Left cardiac atrium (tissue), 4 donors: ENCODE measurements at regions of chr19 and their contacts with region 1.

Region 1: DNA sequence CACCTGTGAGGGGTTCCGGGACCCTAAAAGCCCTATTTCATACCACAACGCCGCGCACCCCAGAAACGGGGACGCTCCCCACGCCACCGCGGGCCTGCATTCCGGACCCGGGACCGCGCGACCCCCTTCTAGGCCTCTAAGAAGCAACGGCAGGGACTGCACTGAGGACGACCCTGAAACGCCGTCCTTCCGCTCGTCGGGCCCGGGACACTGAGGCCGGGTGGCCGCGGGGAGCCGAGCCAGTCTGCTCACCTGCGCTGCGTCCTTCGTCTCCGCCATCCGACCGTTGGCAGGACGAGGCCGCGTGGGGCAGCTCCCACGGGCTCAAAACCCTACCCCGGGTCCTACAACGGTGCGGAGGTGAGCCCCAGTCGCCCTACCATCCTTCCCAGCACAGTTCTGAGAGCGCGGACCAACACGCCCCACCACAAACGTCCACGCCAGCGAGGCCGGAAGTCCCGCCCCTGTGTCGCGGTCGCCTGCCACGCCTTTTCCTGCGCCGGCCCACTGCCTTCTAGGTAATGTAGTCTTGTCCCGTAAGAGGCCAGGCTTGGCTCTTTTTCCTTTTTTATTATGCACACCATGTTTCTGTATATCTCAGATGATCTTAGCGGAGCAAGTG is at the start of gene ZNF550:
- DNase-seq: peak; percentile 94
- ATAC-seq: peak; percentile 100
- total RNA-seq, gene ZNF550: 6.4 to 9.0 TPM

Region 2: GRCh38 chr19:57288373-57288772 is 271.1 kb before region 1 on chr19:
- intact Hi-C with region 1: no loop called
- DNase-seq: no peak
- ATAC-seq: no peak

Region 3: DNA sequence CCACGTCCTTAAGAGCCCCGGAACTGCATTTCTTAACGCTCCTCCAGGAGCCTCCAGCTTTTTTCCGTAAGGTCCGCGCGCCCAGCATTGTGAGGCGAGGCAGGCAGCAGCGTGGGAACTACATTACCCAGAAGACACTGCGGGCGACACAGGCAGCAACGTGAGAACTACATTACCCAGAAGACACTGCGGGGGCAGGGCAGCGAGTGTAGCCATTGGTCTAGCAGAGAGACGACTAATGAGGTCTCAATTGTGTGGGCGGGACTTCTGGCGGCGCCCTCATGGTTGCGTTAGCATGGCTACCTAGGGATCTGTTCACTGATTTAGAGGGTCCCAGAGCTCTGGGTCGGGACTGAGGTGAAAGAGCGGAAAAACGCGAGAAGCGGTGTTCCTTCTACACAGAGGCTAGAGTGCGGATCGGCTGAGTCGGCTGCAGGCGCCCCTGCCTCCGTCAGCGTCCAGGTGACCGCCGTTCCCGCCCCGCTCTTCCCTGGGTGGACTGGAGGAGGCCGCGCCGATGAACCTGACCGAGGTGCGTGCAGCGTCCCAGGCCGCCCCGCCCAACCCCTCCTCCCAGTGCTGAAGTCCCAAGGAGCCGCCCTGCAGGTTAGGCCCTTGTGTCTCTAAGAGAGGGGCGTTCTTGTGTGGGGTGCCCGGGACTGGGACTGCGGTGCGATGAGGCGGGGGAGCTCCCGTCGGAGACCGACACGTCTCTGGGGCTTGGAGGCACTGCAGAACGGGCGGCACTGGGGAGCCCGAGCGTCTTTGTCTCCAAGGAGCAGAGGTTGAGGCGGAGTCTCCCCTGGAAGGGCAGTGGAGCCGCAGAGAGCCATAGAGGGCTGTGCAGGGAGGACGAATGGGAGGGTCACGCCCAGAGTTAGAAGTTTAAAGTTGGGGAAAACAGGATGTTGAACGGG is 124.2 kb before region 1 on chr19 and contains the start of gene ZNF749:
- intact Hi-C with region 1: loop called in 1 of 2 experiments (anchors 10 kb)
- DNase-seq: peak; percentile 99
- ATAC-seq: peak; percentile 100
- total RNA-seq, gene ZNF749: 3.0 to 7.1 TPM